ENCODE measurements at regions of chr5 and their contacts with region 1.

Region 1: DNA sequence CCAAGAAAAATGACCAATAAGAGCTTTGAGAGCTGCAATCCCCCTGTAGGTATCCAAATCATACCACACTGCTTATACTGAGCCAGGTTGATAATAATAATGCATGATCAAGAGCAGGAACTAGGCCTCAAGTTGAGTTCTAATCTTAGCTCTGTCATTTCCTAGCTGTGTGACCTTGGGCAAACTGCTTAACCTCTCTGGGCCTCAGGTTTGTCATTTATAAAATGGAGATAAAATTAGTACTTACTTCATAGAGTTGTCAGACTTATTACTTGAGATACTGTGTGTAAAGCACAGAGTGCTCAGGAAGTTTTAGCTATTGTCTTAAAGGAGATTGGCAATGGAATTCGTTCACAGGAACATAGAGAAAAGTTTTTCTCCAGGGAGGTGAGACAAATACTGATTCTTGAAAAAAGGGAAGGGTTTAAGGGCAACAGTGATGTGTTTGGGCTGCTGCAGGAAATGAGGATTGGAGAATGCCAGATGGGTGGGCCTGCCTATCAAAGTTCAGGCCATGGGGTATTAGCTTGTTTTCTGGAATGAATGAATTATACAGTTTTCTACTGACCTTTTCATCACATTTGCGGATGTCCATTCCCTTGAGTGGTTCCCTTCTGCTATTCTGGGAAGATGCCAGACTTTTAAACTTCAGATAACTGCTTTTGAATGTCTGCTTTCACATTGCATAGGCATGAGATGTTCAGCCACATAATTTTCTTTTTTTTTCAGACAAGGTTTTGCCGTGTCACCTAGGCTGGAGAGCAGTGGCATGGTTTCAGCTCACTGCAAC is 10.2 kb upstream of the ATP6V0E1 start:
- DNase-seq: no peak
- ATAC-seq: no peak
- H3K4me3 ChIP-seq: no peak overlapping the region
- H3K27ac ChIP-seq: no peak overlapping the region
- H3K4me1 ChIP-seq: no peaks in the 10 kb centered on the region
- H3K27me3 ChIP-seq: no peaks in the 10 kb centered on the region
- CTCF ChIP-seq: no peak

Region 2: GRCh38 chr5:172751766-172752510 is 221.4 kb before region 1 on chr5:
- CTCF ChIA-PET with region 1: no interaction called
- POLR2A ChIA-PET with region 1: interaction called, 11 read pairs
- intact Hi-C with region 1: no loop called
- DNase-seq: no peak
- ATAC-seq: no peak
- H3K4me3 ChIP-seq: no peak overlapping the region
- H3K27ac ChIP-seq: no peak overlapping the region
- H3K4me1 ChIP-seq: no peaks in the 10 kb centered on the region
- H3K27me3 ChIP-seq: no peaks in the 10 kb centered on the region
- CTCF ChIP-seq: no peak

Region 3: GRCh38 chr5:172958331-172959046 is 14.8 kb before region 1 on chr5:
- CTCF ChIA-PET with region 1: interaction called, 6 read pairs
- POLR2A ChIA-PET with region 1: interaction called, 17 read pairs
- intact Hi-C with region 1: no loop called
- DNase-seq: peak; percentile 59
- ATAC-seq: peak; percentile 74
- H3K4me3 ChIP-seq: peak overlapping the region; percentile 92
- H3K27ac ChIP-seq: no peak overlapping the region
- H3K4me1 ChIP-seq: peaks cover 22% of the 10 kb centered on the region
- H3K27me3 ChIP-seq: no peaks in the 10 kb centered on the region
- CTCF ChIP-seq: no peak

Measured in PC-3 (cell line).